Posterior vena cava (tissue), 2 donors: ENCODE measurements at regions of chr5 and their contacts with region 1.

Region 1: GRCh38 chr5:116778032-116778431 is 203.4 kb upstream of the SEMA6A start:
- DNase-seq: no peak

Region 2: DNA sequence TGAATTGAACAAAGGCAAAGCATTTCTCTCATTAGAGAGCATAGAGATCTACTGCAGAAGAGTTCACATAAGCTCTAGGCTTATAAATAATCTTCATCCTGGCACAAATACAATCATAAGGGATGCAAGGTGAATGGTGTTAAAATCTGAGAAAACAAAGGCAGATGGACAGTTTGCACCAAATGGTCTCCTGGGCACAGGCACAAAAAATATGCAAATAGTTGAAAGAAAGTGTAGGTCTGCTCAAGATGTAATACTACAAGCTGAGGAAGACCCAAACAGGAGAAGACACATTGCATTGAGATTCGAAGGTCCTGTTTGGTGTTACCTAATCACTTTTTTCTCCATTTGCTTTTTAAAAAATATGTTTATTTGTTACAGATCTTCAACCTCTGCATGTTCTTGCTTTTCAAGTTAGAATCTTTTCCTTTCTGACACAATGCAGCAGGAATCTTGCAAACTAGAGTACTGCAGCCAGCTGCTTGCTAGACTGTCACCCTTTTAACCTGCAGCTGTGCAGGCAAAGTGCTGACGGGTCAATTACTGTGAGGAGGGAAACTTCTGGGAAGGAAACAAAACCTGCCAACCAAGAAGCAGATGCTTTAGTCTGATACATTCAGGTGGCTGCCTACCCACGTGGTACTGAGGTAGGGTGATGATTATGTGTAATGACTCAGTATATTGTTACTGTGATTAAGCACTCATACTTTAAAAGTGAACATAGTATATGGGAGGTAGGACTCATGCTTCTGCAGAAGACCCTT is 845.2 kb after region 1 on chr5:
- intact Hi-C with region 1: loop called in 1 of 2 experiments (anchors 5 kb)
- DNase-seq: no peak